PC-3 (cell line): ENCODE measurements at regions of chr5 and their contacts with region 1.

Region 1: GRCh38 chr5:53714322-53714941 is 154.0 kb downstream of the NDUFS4 start:
- DNase-seq: peak; percentile 24
- ATAC-seq: peak; percentile 89
- H3K4me3 ChIP-seq: no peak overlapping the region
- H3K27ac ChIP-seq: peak overlapping the region; percentile 52
- H3K4me1 ChIP-seq: peaks cover 8% of the 10 kb centered on the region; the same call in 1 of the 2 replicates
- H3K27me3 ChIP-seq: no peaks in the 10 kb centered on the region
- CTCF ChIP-seq: no peak

Region 2: GRCh38 chr5:53392073-53392472 is 322.4 kb before region 1 on chr5:
- CTCF ChIA-PET with region 1: interaction called, 12 read pairs
- POLR2A ChIA-PET with region 1: no interaction called
- intact Hi-C with region 1: no loop called
- DNase-seq: no peak
- ATAC-seq: no peak
- H3K4me3 ChIP-seq: no peak overlapping the region
- H3K27ac ChIP-seq: no peak overlapping the region
- H3K4me1 ChIP-seq: no peaks in the 10 kb centered on the region
- H3K27me3 ChIP-seq: no peaks in the 10 kb centered on the region
- CTCF ChIP-seq: no peak

Region 3: DNA sequence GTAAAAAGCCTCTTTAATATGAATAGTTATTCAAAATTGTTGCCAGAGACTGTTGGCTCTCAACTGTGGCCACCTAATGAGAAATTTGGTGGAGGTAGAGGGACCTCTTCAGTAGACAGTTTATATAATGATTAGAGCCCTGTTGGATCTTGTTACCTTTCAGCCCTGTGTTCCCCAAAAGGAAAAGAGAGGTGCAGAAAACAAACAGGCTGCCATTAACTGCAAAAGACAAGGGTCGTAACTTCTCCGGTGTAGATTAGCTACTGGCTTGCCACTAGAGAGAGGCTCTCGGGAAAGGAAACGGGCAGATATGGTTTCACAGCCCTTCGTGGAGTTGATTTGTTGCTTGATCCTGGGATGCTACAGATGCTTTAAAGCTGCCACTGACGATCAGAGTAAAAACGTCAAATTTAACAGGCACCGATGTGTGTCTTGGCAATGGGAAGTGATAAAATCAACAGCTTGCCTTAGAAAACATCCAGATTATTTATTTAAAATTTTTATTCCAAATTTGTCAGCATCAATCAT is 226.2 kb before region 1 on chr5:
- CTCF ChIA-PET with region 1: no interaction called
- POLR2A ChIA-PET with region 1: interaction called, 18 read pairs
- intact Hi-C with region 1: no loop called
- DNase-seq: peak; percentile 23
- ATAC-seq: peak; percentile 27
- H3K4me3 ChIP-seq: no peak overlapping the region
- H3K27ac ChIP-seq: no peak overlapping the region
- H3K4me1 ChIP-seq: peaks cover 16% of the 10 kb centered on the region
- H3K27me3 ChIP-seq: no peaks in the 10 kb centered on the region
- CTCF ChIP-seq: no peak